Heart right ventricle (tissue), 16 donors: ENCODE measurements at regions of chr3 and their contacts with region 1.

Region 1: DNA sequence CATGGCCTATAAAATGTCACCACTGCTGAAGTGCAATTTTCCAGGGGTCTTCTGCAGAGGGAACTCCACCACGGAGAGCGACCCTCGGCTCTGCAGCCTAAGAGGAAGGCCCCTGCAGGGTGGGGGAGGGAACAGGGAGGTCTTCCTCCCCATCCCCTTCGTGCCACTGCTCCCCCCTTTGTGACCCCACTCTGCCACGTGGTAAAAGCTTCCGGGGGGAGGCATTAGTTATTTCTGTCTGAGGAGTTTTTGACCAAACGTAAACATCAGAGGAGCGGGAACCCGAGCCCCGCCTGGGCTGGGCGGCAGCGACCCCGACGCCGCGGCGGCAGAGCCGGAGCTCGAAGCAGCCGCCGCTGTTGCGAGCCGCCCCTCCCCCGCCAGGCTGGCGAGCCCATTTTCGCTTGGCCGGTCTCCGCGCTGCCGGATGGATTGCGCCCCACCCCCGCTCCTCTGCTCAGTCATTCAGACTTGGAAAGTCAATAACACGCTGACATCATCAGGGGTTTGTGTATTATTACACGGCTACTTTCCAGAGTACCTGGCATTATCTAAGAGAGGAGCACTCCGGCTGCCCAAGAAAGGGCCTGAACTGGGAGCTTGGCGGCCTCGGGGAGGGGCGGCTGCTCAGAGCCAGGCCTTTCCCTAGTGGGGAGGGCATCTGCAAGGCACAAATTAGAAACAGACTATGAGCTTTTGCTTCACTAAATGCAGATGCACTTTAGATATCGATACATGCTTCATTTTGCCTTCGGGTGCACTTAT is 162.5 kb upstream of the TBL1XR1 start:
- DNase-seq: peak; percentile 96
- ATAC-seq: peak; percentile 89 to 95 (median 93)
- H3K4me3 ChIP-seq: peak overlapping the region in 8 of 10 donors; percentile 14 to 51 (median 46)
- H3K27ac ChIP-seq: peak overlapping the region; percentile 64 to 97 (median 91)
- H3K4me1 ChIP-seq: peaks cover 34 to 77% (median 59%) of the 10 kb centered on the region in 9 donors
- H3K27me3 ChIP-seq: no peaks in the 10 kb centered on the region
- CTCF ChIP-seq: peak in 2 of 9 donors; percentile 19 to 31

Region 2: DNA sequence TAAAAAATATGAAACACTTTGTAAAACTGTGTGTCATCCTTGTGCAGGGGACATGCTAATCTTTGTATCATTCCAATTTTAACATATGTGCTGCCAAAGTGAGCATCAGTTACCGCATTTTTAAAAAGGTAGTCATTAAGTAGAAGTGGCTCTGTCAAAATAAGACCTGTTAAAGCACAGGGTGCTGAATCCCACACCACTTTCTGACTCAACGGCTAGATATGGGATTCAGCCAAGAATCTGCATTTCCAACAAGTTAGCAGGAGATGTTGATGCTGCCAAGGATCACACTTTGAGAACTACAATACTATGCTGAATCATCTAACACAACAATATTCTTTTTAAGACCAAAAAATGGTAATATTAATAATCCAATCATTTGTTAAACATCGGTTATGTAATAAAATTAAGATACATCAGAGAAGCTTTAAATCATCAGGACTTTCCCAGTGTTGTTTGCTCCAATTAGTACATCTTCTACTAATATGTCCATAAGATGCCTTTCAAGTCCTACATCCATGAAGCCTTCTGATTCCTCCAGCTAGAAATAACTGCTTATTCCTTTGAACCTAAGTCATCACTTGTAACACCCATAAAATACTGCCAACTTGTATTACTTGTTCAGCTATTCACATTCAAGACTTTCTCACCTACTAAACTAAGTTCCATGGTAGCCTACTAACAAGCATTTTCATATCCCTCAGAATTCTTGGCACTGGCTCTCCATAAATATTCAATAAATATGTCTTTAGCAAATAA is 233.6 kb before region 1 on chr3:
- intact Hi-C with region 1: loop called in 1 of 10 experiments (anchors 10 kb)
- DNase-seq: peak in 1 of 2 donors; percentile 25
- ATAC-seq: peak in 7 of 8 donors; percentile 26 to 94 (median 75)
- H3K4me3 ChIP-seq: no peak overlapping the region
- H3K27ac ChIP-seq: peak overlapping the region in 7 of 10 donors; percentile 7 to 51 (median 19)
- H3K4me1 ChIP-seq: peaks cover 2 to 87% (median 60%) of the 10 kb centered on the region in 9 donors
- H3K27me3 ChIP-seq: no peaks in the 10 kb centered on the region
- CTCF ChIP-seq: no peak

Region 3: GRCh38 chr3:177419904-177420601 is 60.3 kb after region 1 on chr3:
- intact Hi-C with region 1: loop called in 1 of 10 experiments (anchors 5 kb)
- DNase-seq: no peak
- ATAC-seq: peak in 4 of 8 donors; percentile 21 to 51 (median 26)
- H3K4me3 ChIP-seq: no peak overlapping the region
- H3K27ac ChIP-seq: no peak overlapping the region
- H3K4me1 ChIP-seq: peaks cover 0 to 29% (median 12%) of the 10 kb centered on the region in 9 donors
- H3K27me3 ChIP-seq: no peaks in the 10 kb centered on the region
- CTCF ChIP-seq: no peak

Region 4: DNA sequence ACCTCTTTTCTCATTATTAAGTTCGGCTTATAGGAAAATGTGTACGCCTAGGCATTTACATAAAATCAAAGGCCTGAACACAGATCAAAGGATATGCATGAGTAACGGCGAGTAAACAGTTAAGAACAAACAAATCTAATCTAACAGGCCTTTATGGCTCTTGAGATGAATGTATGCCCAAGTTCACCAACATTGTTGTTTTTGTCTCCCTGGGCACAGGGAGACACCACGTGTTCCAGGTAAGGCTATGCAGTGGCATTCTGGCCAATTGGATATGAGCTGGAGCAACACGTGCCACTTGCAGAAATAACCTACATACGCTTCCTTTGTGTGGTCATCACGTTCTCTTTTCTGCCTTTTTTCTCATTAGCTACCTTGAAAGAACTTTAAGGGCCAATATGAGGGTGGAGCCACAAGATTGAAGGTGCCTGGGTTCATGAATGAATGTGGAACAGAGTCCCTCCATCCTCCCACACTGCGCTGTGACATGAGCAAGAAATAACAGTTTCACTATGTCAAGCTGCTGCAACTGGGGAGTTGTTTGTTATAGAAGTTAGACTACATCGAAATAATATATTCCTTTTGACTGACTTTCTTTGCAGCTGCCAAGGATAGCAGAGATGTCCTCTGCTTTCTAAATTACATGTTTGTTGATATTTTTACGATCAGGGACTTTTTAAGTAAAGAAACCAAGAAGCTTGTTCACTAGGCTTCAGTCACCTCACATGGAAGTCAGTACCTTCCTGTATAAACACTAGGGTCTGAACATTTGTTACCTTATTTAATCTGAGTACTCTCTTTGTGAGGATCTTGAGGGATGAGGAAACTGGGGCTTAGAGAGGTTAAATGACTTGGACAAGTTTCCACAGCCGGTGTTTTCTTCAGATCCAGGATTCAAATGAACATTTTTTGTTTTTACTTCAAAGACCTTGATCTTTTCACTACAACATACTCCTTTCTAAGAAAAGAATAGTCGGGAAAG is 265.0 kb after region 1 on chr3:
- intact Hi-C with region 1: loop called in 1 of 10 experiments (anchors 10 kb)
- DNase-seq: no peak
- ATAC-seq: no peak
- H3K4me3 ChIP-seq: no peak overlapping the region
- H3K27ac ChIP-seq: no peak overlapping the region
- H3K4me1 ChIP-seq: peaks cover 0 to 35% (median 17%) of the 10 kb centered on the region in 9 donors
- H3K27me3 ChIP-seq: no peaks in the 10 kb centered on the region
- CTCF ChIP-seq: no peak

Region 5: DNA sequence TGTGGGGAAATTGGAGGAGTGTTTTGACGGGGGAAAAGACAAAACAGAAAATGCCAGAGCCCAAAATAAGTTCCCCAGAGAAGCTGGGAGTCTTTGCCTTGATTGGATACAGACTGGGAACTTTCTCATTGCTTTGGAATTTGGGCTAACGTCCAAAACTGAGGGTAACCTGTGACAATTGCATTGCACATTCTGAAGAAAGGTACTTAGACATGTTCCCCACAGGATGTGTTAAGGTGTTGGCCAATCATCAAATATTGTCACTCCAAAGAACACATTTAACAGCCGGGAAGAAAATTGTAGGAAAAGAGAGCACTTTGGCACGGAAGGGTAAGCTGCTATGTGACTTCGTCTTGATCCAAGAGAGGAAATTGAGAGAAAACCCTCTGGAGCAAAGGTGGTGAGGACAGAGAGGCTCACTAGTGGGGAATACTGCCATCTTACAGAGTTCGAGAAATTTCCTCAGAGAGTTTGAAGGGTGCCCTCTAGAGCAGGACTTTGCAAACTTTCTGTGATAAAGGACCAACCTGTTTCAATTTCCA is 457.0 kb after region 1 on chr3:
- intact Hi-C with region 1: loop called in 4 of 10 experiments (anchors 5 to 10 kb)
- DNase-seq: peak in 1 of 2 donors; percentile 45
- ATAC-seq: peak; percentile 53 to 74 (median 67)
- H3K4me3 ChIP-seq: no peak overlapping the region
- H3K27ac ChIP-seq: peak overlapping the region in 8 of 10 donors; percentile 20 to 74 (median 55)
- H3K4me1 ChIP-seq: peaks cover 2 to 69% (median 33%) of the 10 kb centered on the region in 9 donors
- H3K27me3 ChIP-seq: no peaks in the 10 kb centered on the region
- CTCF ChIP-seq: peak in 6 of 9 donors; percentile 9 to 48 (median 32)